Endothelial cell of umbilical vein (primary cell): ENCODE measurements at regions of chr6 and their contacts with region 1.

Region 1: GRCh38 chr6:130796313-130796905 is 30.8 kb upstream of the SMLR1 start:
- DNase-seq: peak; percentile 95
- H3K4me3 ChIP-seq: no peak overlapping the region
- H3K27ac ChIP-seq: no peak overlapping the region
- H3K4me1 ChIP-seq: peaks cover 19% of the 10 kb centered on the region
- H3K27me3 ChIP-seq: no peaks in the 10 kb centered on the region
- CTCF ChIP-seq: no peak
- POLR2A ChIP-seq: peak; percentile 21

Region 2: DNA sequence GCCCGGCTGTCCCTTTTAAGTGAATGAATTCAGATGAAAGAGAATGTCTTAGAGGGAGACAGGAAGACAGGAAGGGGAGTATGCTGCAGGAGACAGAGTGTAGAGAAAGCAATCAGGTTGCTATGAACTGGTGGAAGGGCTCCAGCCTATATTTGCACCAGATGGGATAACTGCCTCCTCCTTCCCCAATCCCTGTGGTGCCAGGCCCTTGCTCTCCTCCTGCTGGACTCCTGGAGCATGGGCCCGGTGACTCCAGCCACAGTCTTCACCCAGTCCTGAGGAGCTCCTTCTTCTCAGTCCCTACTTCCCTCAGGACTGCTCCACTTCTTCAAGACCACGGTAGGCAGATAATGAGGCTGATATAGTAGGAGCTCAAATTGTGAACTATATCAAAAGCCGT is 338.8 kb before region 1 on chr6:
- CTCF ChIA-PET with region 1: no interaction called
- POLR2A ChIA-PET with region 1: no interaction called
- dilution Hi-C with region 1: no loop called
- intact Hi-C with region 1: no loop called
- DNase-seq: no peak
- H3K4me3 ChIP-seq: no peak overlapping the region
- H3K27ac ChIP-seq: no peak overlapping the region
- H3K4me1 ChIP-seq: no peaks in the 10 kb centered on the region
- H3K27me3 ChIP-seq: no peaks in the 10 kb centered on the region
- CTCF ChIP-seq: no peak
- POLR2A ChIP-seq: no peak

Region 3: DNA sequence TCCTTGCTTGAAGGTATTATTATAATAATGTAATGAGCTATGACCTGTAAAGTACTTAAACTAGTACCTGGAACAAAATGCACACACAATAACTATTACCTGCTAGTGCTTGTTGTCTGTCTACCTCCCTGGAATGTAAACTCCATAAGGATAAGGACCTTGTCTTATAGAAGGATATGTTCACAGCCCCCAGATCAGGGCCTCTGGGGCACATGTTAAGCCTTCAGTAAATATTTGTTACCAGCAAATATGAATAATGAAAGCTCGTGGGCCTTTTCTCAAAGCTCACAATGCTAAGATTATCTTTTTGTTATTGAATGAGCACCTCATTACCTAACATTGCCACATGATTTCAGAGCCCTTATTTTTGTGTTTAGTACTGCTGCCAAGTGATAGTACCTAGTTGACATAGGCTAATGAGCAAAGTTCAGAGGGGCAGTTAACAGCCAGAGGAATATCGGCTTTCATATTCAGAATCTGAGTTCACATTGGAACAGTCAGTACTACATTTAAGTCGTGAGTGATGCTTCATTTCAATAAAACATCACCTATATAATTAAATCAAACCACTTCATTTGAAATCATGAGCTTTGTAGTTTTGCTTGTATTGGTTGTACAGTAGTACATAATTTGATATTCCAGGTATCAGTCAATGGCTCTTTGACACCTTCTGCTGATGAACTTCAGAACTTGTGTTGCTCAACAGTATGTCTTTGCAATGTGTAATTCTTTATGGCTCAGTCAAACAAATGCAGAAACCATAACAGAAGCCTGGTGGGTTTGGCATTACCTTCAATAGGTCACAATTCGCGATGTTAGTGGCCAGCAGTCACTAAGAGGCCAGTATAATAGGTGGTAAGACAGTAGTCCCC is 19.0 kb after region 1 on chr6:
- CTCF ChIA-PET with region 1: no interaction called
- POLR2A ChIA-PET with region 1: no interaction called
- dilution Hi-C with region 1: no loop called
- intact Hi-C with region 1: no loop called
- DNase-seq: no peak
- H3K4me3 ChIP-seq: no peak overlapping the region
- H3K27ac ChIP-seq: no peak overlapping the region
- H3K4me1 ChIP-seq: no peaks in the 10 kb centered on the region
- H3K27me3 ChIP-seq: no peaks in the 10 kb centered on the region
- CTCF ChIP-seq: no peak
- POLR2A ChIP-seq: no peak

Region 4: GRCh38 chr6:130843575-130844320 is 47.3 kb after region 1 on chr6:
- CTCF ChIA-PET with region 1: no interaction called
- POLR2A ChIA-PET with region 1: no interaction called
- dilution Hi-C with region 1: no loop called
- intact Hi-C with region 1: loop called (anchors 2 kb)
- DNase-seq: peak; percentile 64
- H3K4me3 ChIP-seq: no peak overlapping the region
- H3K27ac ChIP-seq: no peak overlapping the region
- H3K4me1 ChIP-seq: no peaks in the 10 kb centered on the region
- H3K27me3 ChIP-seq: no peaks in the 10 kb centered on the region
- CTCF ChIP-seq: peak; percentile 34 to 35
- POLR2A ChIP-seq: no peak